CD4-positive, alpha-beta T cell (primary cell): ENCODE measurements at regions of chr1 and their contacts with region 1.

Region 1: DNA sequence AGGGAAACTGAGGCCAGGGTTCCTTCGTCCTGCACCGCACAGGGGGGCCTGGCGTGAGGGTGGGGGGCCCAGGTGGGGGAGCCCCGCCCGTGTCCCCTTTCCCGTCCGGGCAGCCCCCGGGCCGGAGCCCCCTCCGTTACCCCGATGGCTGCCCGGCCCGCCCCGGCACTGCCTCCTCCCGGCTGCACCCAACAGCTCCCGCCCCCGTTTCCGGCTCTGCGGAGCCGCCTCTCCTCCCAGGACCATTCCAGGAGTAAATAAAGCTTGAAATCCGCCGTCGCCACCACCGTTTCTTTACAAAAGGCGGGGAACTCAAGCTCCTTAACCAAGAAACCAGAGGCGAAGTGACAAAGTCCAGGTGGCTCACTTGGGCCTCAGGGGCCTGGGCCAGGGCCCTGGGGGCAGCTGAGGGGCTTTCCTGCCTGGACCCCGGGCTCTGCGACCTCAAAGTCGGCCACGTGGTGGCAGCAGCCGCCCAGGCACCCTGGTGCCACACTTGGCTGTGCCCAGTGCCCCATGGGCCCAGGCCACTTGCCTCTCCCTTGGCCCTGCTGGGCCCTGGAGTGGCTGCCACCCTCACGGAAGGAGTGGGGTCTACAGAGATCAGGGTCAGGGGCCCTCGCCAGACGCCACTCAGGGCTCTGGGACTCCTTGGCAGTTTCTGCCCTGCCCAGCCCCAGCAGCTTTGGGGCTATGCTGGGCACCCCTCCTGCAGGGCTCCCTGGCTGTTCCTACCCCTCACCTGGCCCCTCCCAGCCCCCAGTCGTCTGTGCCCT is 514 bp upstream of the FAAP20 start:
- DNase-seq: peak; percentile 77 to 93 (median 86)
- ATAC-seq: peak; percentile 71
- H3K4me3 ChIP-seq: peak overlapping the region; percentile 57
- H3K4me3 Mint-ChIP-seq: peak overlapping the region; percentile 88
- H3K27ac ChIP-seq: peak overlapping the region; percentile 83 to 86
- H3K27ac Mint-ChIP-seq: peak overlapping the region; percentile 86
- H3K4me1 ChIP-seq: peaks cover 66% of the 10 kb centered on the region
- H3K4me1 Mint-ChIP-seq: peaks cover 13% of the 10 kb centered on the region
- H3K27me3 ChIP-seq: no peaks in the 10 kb centered on the region
- H3K27me3 Mint-ChIP-seq: no peaks in the 10 kb centered on the region
- CTCF ChIP-seq: peak; percentile 94

Region 2: DNA sequence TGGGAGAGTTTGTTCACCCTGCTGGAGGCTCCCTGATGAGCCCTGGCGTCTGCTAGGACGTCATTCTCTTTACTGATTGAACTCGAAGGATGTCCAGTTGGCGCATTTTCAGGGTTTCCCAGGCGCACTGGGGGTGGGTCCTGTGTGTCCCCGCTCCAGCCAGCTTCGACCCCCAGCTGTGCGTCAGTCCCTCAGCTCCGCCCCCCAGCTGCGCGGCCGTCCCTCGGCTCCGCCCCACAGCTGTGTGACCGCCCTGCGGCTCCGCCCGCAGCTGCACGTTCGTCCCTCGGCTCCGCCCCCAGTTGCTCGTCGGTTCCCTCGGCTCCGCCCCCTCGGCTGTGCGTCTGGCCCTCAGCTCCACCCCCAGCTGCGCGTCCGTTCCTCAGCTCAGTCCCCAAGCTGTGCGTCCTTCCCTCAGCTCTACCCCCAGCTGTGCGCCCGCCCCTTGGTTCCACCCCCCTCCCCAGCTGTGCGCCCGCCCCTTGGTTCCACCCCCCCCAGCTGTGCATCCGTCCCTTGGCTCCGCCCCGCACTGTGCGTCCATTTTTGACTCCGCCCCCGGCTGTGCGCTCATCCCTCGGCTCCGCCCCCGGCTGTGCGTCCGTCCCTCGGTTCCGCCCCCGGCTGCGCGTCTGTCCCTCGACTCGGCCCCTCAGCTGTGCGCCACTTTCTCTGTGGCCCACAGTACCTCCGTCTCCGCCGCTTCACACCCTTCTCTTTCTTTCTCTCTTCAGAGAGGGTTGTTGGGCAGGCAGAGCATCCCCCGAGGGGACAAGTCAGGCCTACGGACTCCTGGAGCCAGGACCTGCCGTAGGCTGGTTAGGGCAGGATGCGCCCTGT is 61.8 kb before region 1 on chr1:
- CTCF ChIA-PET with region 1: interaction called, 5 read pairs
- POLR2A ChIA-PET with region 1: interaction called, 8 read pairs
- intact Hi-C with region 1: loop called (anchors 5 to 10 kb)
- DNase-seq: peak; percentile 93 to 99 (median 97)
- ATAC-seq: peak; percentile 90
- H3K4me3 ChIP-seq: peak overlapping the region; percentile 70
- H3K4me3 Mint-ChIP-seq: peak overlapping the region; percentile 90
- H3K27ac ChIP-seq: peak overlapping the region; percentile 70 to 91
- H3K27ac Mint-ChIP-seq: peak overlapping the region; percentile 90
- H3K4me1 ChIP-seq: peaks cover 22% of the 10 kb centered on the region
- H3K4me1 Mint-ChIP-seq: peaks cover 32% of the 10 kb centered on the region
- H3K27me3 ChIP-seq: no peaks in the 10 kb centered on the region
- H3K27me3 Mint-ChIP-seq: no peaks in the 10 kb centered on the region
- CTCF ChIP-seq: no peak

Region 3: GRCh38 chr1:2233997-2234761 is 39.1 kb after region 1 on chr1:
- CTCF ChIA-PET with region 1: interaction called, 25 read pairs
- POLR2A ChIA-PET with region 1: interaction called, 35 read pairs
- intact Hi-C with region 1: loop called (anchors 5 kb)
- DNase-seq: peak; percentile 62 to 93 (median 80)
- ATAC-seq: peak; percentile 49
- H3K4me3 ChIP-seq: peak overlapping the region; percentile 95
- H3K4me3 Mint-ChIP-seq: peak overlapping the region; percentile 99
- H3K27ac ChIP-seq: peak overlapping the region; percentile 80 to 92
- H3K27ac Mint-ChIP-seq: peak overlapping the region; percentile 100
- H3K4me1 ChIP-seq: peaks cover 99% of the 10 kb centered on the region
- H3K4me1 Mint-ChIP-seq: peaks cover 71% of the 10 kb centered on the region
- H3K27me3 ChIP-seq: no peaks in the 10 kb centered on the region
- H3K27me3 Mint-ChIP-seq: peaks cover 20% of the 10 kb centered on the region
- CTCF ChIP-seq: no peak

Region 4: GRCh38 chr1:2314803-2315673 is 120.0 kb after region 1 on chr1:
- CTCF ChIA-PET with region 1: interaction called, 6 read pairs
- POLR2A ChIA-PET with region 1: interaction called, 6 read pairs
- intact Hi-C with region 1: loop called in 1 of 2 experiments (anchors 2 kb)
- DNase-seq: peak; percentile 41 to 86 (median 66)
- ATAC-seq: peak; percentile 45
- H3K4me3 ChIP-seq: peak overlapping the region; percentile 56
- H3K4me3 Mint-ChIP-seq: peak overlapping the region; percentile 83
- H3K27ac ChIP-seq: peak overlapping the region; percentile 47 to 61
- H3K27ac Mint-ChIP-seq: peak overlapping the region; percentile 81
- H3K4me1 ChIP-seq: peaks cover 61% of the 10 kb centered on the region
- H3K4me1 Mint-ChIP-seq: peaks cover 19% of the 10 kb centered on the region
- H3K27me3 ChIP-seq: no peaks in the 10 kb centered on the region
- H3K27me3 Mint-ChIP-seq: no peaks in the 10 kb centered on the region
- CTCF ChIP-seq: peak; percentile 96

Region 5: DNA sequence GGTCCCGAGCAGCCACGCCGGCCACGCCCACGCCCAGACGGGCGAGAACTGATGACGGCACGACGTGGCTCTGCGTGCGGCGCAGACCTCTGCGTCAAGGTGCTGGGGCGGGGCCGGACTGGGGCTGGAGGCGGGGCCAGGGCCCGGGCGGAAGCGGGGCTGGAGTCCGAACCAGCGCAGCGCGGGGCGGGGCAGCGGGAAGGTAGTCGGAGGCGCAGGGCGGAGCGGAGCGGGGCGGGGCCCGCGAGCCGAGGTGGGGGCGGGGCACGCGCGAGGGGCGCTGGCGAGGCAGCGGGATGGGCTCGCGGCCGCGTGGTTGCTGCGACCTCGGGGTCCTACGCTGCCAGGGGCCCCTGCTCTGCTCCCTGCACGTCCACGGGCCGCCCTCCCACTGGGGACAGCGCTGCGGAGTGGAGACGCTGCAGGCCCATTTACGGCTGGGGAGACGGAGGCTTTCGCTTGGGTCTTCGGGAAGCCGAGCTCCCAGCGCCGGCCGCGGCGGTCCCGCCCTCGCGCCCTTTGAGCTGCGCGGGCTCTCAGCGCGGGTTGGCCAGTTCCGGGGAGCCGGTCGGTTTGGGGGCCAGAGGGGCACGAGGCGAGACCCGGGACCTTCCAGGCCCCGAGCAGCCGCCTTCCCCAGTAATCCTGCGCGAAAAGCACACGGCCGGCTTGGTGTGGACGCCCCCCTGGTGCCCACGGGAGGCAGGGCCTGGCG is 217.6 kb after region 1 on chr1 and contains the start of gene PEX10:
- CTCF ChIA-PET with region 1: no interaction called
- POLR2A ChIA-PET with region 1: interaction called, 3 read pairs
- intact Hi-C with region 1: loop called in 1 of 2 experiments (anchors 1 kb)
- DNase-seq: peak; percentile 95 to 99 (median 98)
- ATAC-seq: peak; percentile 89
- H3K4me3 ChIP-seq: peak within 1 kb of the TSS; percentile 67
- H3K4me3 Mint-ChIP-seq: peak within 1 kb of the TSS; percentile 94
- H3K27ac ChIP-seq: peak within 1 kb of the TSS; percentile 69 to 72
- H3K27ac Mint-ChIP-seq: peak within 1 kb of the TSS; percentile 92
- H3K4me1 ChIP-seq: peaks cover 57% of the 10 kb centered on the region
- H3K4me1 Mint-ChIP-seq: peaks cover 32% of the 10 kb centered on the region
- H3K27me3 ChIP-seq: no peaks in the 10 kb centered on the region
- H3K27me3 Mint-ChIP-seq: no peaks in the 10 kb centered on the region
- CTCF ChIP-seq: no peak
- total RNA-seq, gene PEX10: 12.0 to 12.5 TPM

Region 6: DNA sequence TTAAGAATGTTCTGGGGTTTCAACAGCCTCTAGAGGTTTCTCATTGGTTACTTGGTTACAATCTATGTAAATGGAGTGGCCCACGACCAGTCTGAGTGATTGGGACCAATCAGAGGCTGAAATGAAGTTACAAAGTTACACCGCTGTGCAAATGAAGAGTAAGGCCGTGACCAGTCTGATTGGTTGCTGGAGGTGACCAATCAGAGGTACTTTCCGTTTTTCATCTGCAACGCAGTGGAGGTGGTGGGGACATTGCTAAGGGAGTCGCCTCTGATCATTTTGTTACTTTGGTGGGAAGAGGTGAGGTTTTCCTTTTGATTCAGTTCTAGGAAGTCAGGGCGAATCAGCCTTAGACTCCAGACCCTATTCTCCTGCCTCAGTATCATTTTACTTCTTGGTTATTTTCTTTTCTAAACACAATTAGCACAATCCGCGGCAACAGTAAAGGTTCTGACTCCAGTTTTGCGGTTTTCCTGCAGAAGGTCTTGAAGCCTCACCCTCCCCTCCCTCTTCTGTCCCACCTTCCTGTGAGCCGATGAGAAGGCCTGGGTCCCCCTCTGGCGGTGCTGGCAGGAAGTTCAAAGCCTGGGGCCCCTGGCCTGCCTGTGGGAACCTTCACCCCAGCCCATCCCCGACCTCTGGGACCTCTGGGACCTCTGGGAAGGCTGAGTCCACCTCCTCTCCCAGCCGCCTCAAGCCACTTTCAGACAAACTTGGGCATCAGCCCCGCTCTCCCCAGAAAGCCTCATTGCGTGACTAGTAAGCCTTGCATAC is 645.1 kb after region 1 on chr1:
- CTCF ChIA-PET with region 1: no interaction called
- POLR2A ChIA-PET with region 1: no interaction called
- intact Hi-C with region 1: loop called in 1 of 2 experiments (anchors 10 kb)
- DNase-seq: peak; percentile 52 to 86 (median 68)
- ATAC-seq: peak; percentile 89
- H3K4me3 ChIP-seq: peak overlapping the region; percentile 35
- H3K4me3 Mint-ChIP-seq: peak overlapping the region; percentile 83
- H3K27ac ChIP-seq: peak overlapping the region; percentile 11 to 55
- H3K27ac Mint-ChIP-seq: peak overlapping the region; percentile 85
- H3K4me1 ChIP-seq: peaks cover 17% of the 10 kb centered on the region
- H3K4me1 Mint-ChIP-seq: peaks cover 23% of the 10 kb centered on the region
- H3K27me3 ChIP-seq: no peaks in the 10 kb centered on the region
- H3K27me3 Mint-ChIP-seq: no peaks in the 10 kb centered on the region
- CTCF ChIP-seq: peak; percentile 84